ENCODE measurements at regions of chr16 and their contacts with region 1.

Region 1: GRCh38 chr16:60203525-60204124 is 1469.5 kb upstream of the GOT2 start:
- DNase-seq: no peak
- H3K4me3 ChIP-seq: no peak overlapping the region
- H3K27ac ChIP-seq: no peak overlapping the region
- H3K4me1 ChIP-seq: peaks cover 0 to 6% (median 0%) of the 10 kb centered on the region in 4 donors
- H3K27me3 ChIP-seq: no peaks in the 10 kb centered on the region
- CTCF ChIP-seq: peak; percentile 37 to 57 (median 43)
- EP300 ChIP-seq: no peak
- POLR2A ChIP-seq: no peak

Region 2: GRCh38 chr16:59411961-59412841 is 791.4 kb before region 1 on chr16:
- intact Hi-C with region 1: loop called (anchors 5 kb)
- DNase-seq: no peak
- H3K4me3 ChIP-seq: no peak overlapping the region
- H3K27ac ChIP-seq: no peak overlapping the region
- H3K4me1 ChIP-seq: peaks cover 0 to 9% (median 0%) of the 10 kb centered on the region in 4 donors
- H3K27me3 ChIP-seq: no peaks in the 10 kb centered on the region
- CTCF ChIP-seq: peak; percentile 46 to 64 (median 48)
- EP300 ChIP-seq: no peak
- POLR2A ChIP-seq: no peak

Region 3: GRCh38 chr16:60041671-60042070 is 162.0 kb before region 1 on chr16:
- intact Hi-C with region 1: no loop called
- DNase-seq: no peak
- H3K4me3 ChIP-seq: no peak overlapping the region
- H3K27ac ChIP-seq: no peak overlapping the region
- H3K4me1 ChIP-seq: no peaks in the 10 kb centered on the region
- H3K27me3 ChIP-seq: no peaks in the 10 kb centered on the region
- CTCF ChIP-seq: no peak
- EP300 ChIP-seq: no peak
- POLR2A ChIP-seq: no peak